ENCODE measurements at regions of chr17 and their contacts with region 1.

Region 1: GRCh38 chr17:41738077-41738735 is 3.8 kb upstream of the HAP1 start:
- DNase-seq: peak; percentile 94
- H3K4me3 Mint-ChIP-seq: no peak overlapping the region
- H3K27ac Mint-ChIP-seq: peak overlapping the region; percentile 71
- H3K4me1 Mint-ChIP-seq: peaks cover 11% of the 10 kb centered on the region
- H3K27me3 Mint-ChIP-seq: peaks cover 25% of the 10 kb centered on the region

Region 2: DNA sequence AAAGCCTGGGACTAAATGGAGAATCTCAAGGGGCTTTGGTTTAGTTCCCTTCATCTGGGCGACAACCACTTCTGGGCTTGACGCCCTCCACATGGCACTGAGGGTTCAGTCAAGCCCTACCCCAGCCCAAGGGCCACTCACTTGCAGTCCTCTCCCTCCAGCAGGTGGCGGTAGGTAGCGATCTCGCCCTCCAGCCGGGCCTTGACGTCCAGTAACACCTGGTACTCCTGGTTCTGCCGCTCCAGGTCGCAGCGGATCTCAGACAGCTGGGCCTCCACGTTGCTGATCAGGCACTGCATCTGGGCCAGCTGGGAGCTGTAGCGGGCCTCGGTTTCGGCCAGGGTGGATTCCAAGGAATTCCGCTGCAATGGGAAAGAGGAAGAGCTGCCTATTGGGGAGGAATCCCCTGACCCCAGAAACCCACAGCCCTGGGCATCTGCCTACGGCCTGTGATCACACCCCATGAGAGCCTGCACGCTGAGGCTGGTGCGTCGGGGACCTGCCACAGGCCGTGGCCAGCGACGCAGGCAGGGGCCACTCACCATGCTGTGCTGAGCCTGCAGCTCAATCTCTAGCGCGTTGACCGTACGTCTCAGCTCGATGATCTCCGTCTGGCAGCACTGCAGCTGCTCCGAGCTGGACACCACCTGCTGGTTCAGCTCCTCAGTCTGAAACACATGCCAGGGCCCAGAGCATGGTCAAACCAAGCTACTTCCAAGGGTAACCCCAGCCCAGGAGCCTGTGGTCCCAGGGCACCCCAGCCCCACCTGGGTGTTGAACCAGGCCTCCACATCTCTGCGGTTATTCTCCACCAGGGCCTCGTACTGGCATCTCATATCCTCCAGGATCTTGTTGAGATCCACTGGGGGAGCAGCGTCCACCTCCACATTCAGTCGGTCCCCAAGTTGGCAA is 251.1 kb before region 1 on chr17:
- intact Hi-C with region 1: no loop called
- DNase-seq: peak; percentile 80
- H3K4me3 Mint-ChIP-seq: no peak overlapping the region
- H3K27ac Mint-ChIP-seq: no peak overlapping the region
- H3K4me1 Mint-ChIP-seq: no peaks in the 10 kb centered on the region
- H3K27me3 Mint-ChIP-seq: no peaks in the 10 kb centered on the region

Region 3: DNA sequence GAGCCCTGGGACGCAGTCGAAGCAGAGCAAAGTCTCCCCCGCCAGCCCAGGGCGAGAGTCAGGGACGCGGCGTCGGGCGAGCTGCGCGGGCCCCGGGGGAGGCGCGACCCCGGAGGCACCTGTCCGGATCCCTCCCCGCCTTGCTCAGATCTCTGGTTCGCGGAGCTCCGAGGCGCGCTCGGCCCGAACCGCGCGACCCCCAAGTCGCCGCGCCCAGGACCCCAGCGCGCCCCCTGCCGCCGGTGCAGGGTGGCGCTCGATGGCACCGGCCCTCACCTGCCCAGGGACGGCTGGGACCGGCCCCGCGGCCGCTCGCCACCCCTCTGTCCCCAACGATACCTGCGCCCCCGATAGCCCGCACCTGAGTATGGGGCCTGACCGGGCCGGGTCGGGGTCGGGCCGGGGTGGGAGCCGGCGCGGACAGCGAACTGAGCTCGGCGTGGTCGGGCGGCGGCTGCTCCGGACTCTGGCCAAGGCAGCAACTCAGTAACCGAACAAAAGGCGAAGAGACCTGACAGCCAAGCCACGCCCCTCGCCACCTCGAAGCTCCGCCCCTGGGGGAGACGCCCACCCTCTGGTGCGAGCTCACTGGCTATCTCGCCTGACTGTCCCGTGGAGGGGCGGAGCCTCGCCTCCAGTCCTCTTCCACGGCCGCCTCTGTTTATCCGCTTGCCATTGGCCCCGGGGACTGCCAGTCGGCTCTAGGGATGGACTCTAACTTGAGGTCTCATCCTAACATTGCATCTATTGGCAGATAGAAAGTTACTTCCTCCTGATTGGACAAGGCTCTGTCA is 48.2 kb after region 1 on chr17 and contains the start of gene JUP:
- intact Hi-C with region 1: loop called (anchors 5 kb)
- DNase-seq: peak; percentile 97
- H3K4me3 Mint-ChIP-seq: peak within 1 kb of the TSS; percentile 62
- H3K27ac Mint-ChIP-seq: no peak within 1 kb of the TSS
- H3K4me1 Mint-ChIP-seq: peaks cover 8% of the 10 kb centered on the region
- H3K27me3 Mint-ChIP-seq: peaks cover 39% of the 10 kb centered on the region
- total RNA-seq, gene JUP: 0.14 and 0.24 TPM in 2 replicates

Region 4: GRCh38 chr17:41801374-41802271 is 63.4 kb after region 1 on chr17:
- intact Hi-C with region 1: loop called (anchors 1 kb)
- DNase-seq: peak; percentile 92
- H3K4me3 Mint-ChIP-seq: no peak overlapping the region
- H3K27ac Mint-ChIP-seq: no peak overlapping the region
- H3K4me1 Mint-ChIP-seq: peaks cover 4% of the 10 kb centered on the region
- H3K27me3 Mint-ChIP-seq: no peaks in the 10 kb centered on the region

Region 5: DNA sequence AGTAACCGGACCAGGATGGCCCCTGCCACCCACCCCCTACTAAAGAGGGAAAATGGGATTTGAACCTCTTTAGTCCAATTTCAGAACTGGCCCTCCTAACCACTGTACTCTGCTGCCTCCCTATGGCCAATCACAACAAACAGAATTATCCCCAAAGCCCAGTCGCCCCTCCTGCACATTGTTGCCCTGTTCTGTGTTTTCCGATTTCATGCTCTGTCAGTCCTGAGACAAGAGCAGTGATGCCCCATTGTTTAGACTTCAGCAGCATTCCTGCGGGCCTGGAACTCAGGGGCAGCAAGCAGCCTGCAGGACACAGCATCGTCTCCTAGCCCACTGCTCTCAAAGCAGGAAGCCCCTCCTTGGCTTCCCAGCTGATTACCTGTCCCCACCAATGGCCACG is 147.5 kb after region 1 on chr17:
- intact Hi-C with region 1: loop called (anchors 1 kb)
- DNase-seq: peak; percentile 62
- H3K4me3 Mint-ChIP-seq: no peak overlapping the region
- H3K27ac Mint-ChIP-seq: no peak overlapping the region
- H3K4me1 Mint-ChIP-seq: no peaks in the 10 kb centered on the region
- H3K27me3 Mint-ChIP-seq: no peaks in the 10 kb centered on the region